ENCODE measurements at regions of chr19 and their contacts with region 1.

Region 1: GRCh38 chr19:33778089-33778791 is 18.4 kb upstream of the KCTD15 start:
- DNase-seq: peak; percentile 82 to 90 (median 88)
- ATAC-seq: peak; percentile 98
- H3K4me3 ChIP-seq: no peak overlapping the region
- H3K4me1 ChIP-seq: no peaks in the 10 kb centered on the region
- CTCF ChIP-seq: peak; percentile 100

Region 2: GRCh38 chr19:33998739-33999345 is 220.6 kb after region 1 on chr19:
- intact Hi-C with region 1: loop called in 1 of 2 experiments (anchors 10 kb)
- DNase-seq: no peak
- ATAC-seq: no peak
- H3K4me3 ChIP-seq: no peak overlapping the region
- H3K4me1 ChIP-seq: no peaks in the 10 kb centered on the region
- CTCF ChIP-seq: no peak

Region 3: DNA sequence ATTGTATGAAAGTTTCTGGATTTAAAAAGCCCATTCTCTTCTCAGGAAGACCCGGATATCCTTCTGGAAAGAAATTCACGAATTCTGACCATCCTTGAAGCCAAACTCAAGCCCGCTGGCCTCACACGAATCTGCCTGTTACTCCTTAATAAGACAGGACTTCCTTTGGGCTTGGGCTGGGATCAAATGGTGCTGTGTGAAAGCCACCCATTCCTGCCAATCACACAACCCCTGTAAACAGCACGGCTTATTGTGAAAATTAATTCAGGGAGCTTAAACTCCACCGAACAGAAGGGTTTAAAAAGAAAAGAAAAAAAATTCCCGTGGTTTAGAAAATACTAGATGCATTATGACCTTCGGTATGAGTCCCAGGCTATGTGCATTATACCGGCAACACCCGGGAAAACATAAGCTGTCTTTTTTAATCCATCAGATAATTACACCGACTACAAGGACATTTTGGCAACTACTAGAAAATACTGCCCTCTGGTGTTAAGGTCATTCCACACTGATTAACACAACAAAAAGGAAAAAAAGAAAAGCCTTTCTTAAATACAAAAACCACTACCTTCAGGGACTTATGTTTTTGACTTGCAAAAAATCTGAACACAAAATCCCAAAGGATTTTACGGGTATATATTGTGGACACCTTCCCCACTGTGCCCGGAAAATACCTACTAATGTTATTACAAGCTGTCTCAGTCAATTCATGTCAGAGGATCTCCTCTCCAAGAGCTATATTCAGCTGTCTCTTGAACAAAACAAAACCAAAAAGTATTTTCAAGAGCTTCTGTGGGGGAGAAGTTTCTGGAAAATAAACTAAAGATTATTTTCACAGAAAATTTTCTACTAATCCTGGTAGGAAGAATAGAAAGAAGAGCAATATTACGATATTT is 318.0 kb after region 1 on chr19:
- intact Hi-C with region 1: loop called in 1 of 2 experiments (anchors 5 kb)
- DNase-seq: peak in 1 of 3 donors; percentile 9
- ATAC-seq: no peak
- H3K4me3 ChIP-seq: no peak overlapping the region
- H3K4me1 ChIP-seq: no peaks in the 10 kb centered on the region
- CTCF ChIP-seq: peak; percentile 27

Measured in mucosa of descending colon (tissue), 3 donors.